ENCODE measurements at regions of chr10 and their contacts with region 1.

Region 1: DNA sequence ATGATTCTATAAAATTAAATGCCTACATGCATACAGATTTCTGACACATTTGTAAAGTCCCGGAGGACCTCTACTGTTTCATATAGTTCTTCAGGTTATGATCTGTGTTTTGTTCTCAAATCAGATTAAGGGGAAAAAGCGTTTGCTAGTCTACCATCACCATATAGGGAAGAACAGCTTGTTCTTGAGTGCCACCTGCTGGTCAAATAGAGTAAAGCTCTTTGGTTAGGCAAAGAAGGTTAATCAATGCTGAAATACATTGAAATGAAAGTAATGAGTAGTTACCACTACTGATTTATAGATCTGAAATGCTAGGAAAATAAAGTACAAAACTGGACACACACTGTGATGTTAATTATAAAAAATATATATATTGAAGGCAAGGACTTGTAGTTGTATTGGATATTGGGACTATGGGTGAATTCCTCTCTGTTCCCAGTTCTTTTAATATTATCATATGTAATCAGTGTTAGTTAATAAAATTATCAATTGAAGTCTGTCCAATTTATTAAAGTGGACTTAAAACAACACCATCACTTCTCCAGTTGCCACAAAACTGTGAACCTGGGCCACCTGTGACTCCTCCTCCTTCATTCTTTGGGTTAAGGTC is 72.6 kb upstream of the PDLIM1 start:
- DNase-seq: peak; percentile 50
- ATAC-seq: peak; percentile 90
- H3K4me3 ChIP-seq: no peak overlapping the region
- H3K27ac ChIP-seq: no peak overlapping the region
- H3K4me1 ChIP-seq: peaks cover 10% of the 10 kb centered on the region; the same call in 1 of the 2 replicates
- H3K27me3 ChIP-seq: no peaks in the 10 kb centered on the region
- CTCF ChIP-seq: peak; percentile 75 to 87 (median 83)
- EP300 ChIP-seq: no peak
- POLR2A ChIP-seq: no peak
- RAD21 ChIP-seq: peak; percentile 100

Region 2: GRCh38 chr10:95183271-95184230 is 179.9 kb before region 1 on chr10:
- CTCF ChIA-PET with region 1: interaction called, 76 read pairs
- POLR2A ChIA-PET with region 1: interaction called, 3 read pairs
- RAD21 ChIA-PET with region 1: interaction called, 12 read pairs
- SMC1A ChIA-PET with region 1: interaction called, 4 read pairs
- in situ Hi-C with region 1: loop called (anchors 5 kb)
- intact Hi-C with region 1: loop called (anchors 1 kb)
- DNase-seq: peak; percentile 27
- ATAC-seq: peak; percentile 99
- H3K4me3 ChIP-seq: peak overlapping the region; percentile 69
- H3K27ac ChIP-seq: no peak overlapping the region
- H3K4me1 ChIP-seq: no peaks in the 10 kb centered on the region
- H3K27me3 ChIP-seq: no peaks in the 10 kb centered on the region
- CTCF ChIP-seq: peak; percentile 84 to 98 (median 92)
- EP300 ChIP-seq: 0 out of 4 replicates have a peak, but pooled peaks of 1 of the 2 experiments have one; percentile 17
- POLR2A ChIP-seq: peak; percentile 69
- RAD21 ChIP-seq: peak; percentile 67

Region 3: GRCh38 chr10:95236068-95236903 is 127.1 kb before region 1 on chr10:
- CTCF ChIA-PET with region 1: interaction called, 31 read pairs
- POLR2A ChIA-PET with region 1: no interaction called
- RAD21 ChIA-PET with region 1: interaction called, 10 read pairs
- SMC1A ChIA-PET with region 1: interaction called, 57 read pairs
- in situ Hi-C with region 1: no loop called
- intact Hi-C with region 1: no loop called
- DNase-seq: peak; percentile 90
- ATAC-seq: peak; percentile 96
- H3K4me3 ChIP-seq: no peak overlapping the region; the same call in 1 of the 2 replicates
- H3K27ac ChIP-seq: peak overlapping the region; percentile 78
- H3K4me1 ChIP-seq: peaks cover 21% of the 10 kb centered on the region
- H3K27me3 ChIP-seq: no peaks in the 10 kb centered on the region
- CTCF ChIP-seq: no peak
- EP300 ChIP-seq: peak; percentile 93
- POLR2A ChIP-seq: peak; percentile 39; the same call in 1 of the 2 replicates
- RAD21 ChIP-seq: no peak

Region 4: DNA sequence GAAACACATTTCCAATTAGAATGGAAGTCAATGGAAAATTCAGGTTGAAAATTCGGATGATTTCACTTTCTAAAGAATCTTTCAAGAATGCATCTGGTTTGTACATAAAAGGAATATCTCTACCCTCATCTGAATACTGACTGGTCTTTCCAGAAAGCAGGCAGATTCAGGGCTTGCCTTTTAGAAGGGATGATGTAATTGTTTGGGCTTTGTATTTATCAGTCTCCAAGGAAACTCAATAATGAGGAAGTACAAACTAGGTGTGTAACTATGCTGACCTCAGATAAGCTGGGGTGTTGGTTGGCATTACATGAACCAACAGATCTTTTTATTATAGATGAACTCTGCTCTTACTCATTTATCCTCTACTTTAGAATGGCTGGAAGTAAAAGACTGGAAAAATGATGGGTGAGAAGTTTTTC is 96.7 kb before region 1 on chr10:
- CTCF ChIA-PET with region 1: interaction called, 18 read pairs
- POLR2A ChIA-PET with region 1: no interaction called
- RAD21 ChIA-PET with region 1: interaction called, 4 read pairs
- SMC1A ChIA-PET with region 1: interaction called, 12 read pairs
- in situ Hi-C with region 1: no loop called
- intact Hi-C with region 1: no loop called
- DNase-seq: no peak
- ATAC-seq: peak; percentile 93
- H3K4me3 ChIP-seq: no peak overlapping the region
- H3K27ac ChIP-seq: no peak overlapping the region
- H3K4me1 ChIP-seq: peaks cover 4% of the 10 kb centered on the region; the same call in 1 of the 2 replicates
- H3K27me3 ChIP-seq: no peaks in the 10 kb centered on the region
- CTCF ChIP-seq: no peak
- EP300 ChIP-seq: peak in 1 of 2 experiments; percentile 45; a peak in 1 of 4 replicates
- POLR2A ChIP-seq: no peak
- RAD21 ChIP-seq: no peak

Region 5: GRCh38 chr10:95290461-95291364 is 72.7 kb before region 1 on chr10 and contains the start of gene PDLIM1:
- CTCF ChIA-PET with region 1: interaction called, 348 read pairs
- POLR2A ChIA-PET with region 1: interaction called, 5 read pairs
- RAD21 ChIA-PET with region 1: interaction called, 139 read pairs
- SMC1A ChIA-PET with region 1: interaction called, 313 read pairs
- in situ Hi-C with region 1: no loop called
- intact Hi-C with region 1: loop called (anchors 1 kb)
- DNase-seq: no peak
- ATAC-seq: peak; percentile 55
- H3K4me3 ChIP-seq: peak within 1 kb of the TSS; percentile 97
- H3K27ac ChIP-seq: peak within 1 kb of the TSS; percentile 98
- H3K4me1 ChIP-seq: peaks cover 47% of the 10 kb centered on the region
- H3K27me3 ChIP-seq: no peaks in the 10 kb centered on the region
- CTCF ChIP-seq: peak; percentile 21 to 30 (median 27); a peak in 5 of 6 replicates
- EP300 ChIP-seq: no peak
- POLR2A ChIP-seq: peak; percentile 96
- RAD21 ChIP-seq: no peak
- polyA plus RNA-seq, gene PDLIM1: 133 to 338 TPM

Region 6: DNA sequence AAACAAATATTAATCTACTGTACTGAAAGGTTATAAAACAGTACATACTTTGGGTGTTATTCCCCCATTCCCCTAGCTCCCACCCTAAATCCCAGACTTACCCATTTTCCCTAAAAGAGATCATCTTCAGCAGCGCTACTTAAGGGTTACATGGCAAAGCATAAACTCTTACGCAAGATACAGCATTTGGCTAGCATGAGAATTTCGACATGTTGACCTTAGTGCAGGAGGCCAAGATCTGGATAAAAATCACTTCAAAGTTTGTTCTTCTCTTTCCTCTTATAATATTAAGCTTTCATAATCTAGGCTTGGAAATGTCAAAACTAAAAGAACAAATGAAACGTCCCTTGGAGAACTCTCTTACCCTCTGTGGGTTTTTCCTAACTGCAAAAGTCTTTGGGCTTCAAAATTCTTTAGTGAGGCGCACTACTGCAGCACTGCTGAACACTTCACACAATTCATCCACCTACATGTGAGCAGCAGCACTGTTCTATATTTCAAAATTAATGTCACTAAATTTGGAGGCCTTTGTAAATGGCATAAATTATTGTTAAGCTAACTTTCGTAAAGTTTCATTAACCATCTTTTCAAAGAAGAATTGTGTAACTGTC is 13.1 kb before region 1 on chr10:
- CTCF ChIA-PET with region 1: interaction called, 21 read pairs
- POLR2A ChIA-PET with region 1: no interaction called
- RAD21 ChIA-PET with region 1: interaction called, 8 read pairs
- SMC1A ChIA-PET with region 1: interaction called, 22 read pairs
- in situ Hi-C with region 1: no loop called
- intact Hi-C with region 1: no loop called
- DNase-seq: no peak
- ATAC-seq: no peak
- H3K4me3 ChIP-seq: no peak overlapping the region
- H3K27ac ChIP-seq: no peak overlapping the region
- H3K4me1 ChIP-seq: peaks cover 8% of the 10 kb centered on the region; the same call in 1 of the 2 replicates
- H3K27me3 ChIP-seq: no peaks in the 10 kb centered on the region
- CTCF ChIP-seq: no peak
- EP300 ChIP-seq: no peak
- POLR2A ChIP-seq: no peak
- RAD21 ChIP-seq: no peak

Region 7: DNA sequence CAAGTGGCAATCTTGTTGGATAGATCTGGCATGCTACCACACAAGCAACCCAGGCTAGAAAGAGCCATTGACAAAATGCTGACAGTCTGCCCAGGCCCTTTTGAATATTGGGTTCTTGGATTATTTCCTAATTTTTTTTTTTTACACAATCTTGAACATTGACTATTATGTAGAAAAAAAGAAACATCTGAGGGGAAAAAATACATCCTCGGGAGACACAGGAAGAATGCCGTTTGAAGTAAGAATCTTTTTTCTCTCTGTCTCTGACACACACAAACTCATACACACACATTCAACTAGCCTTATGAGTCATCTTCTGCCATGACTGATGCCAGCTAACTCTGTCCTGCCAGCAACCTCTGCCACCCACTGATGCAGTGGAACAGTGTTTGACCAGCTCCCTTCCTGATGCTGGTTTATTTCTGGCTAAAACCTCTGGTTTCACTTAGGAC is 150.6 kb after region 1 on chr10:
- CTCF ChIA-PET with region 1: no interaction called
- POLR2A ChIA-PET with region 1: no interaction called
- RAD21 ChIA-PET with region 1: no interaction called
- SMC1A ChIA-PET with region 1: no interaction called
- in situ Hi-C with region 1: no loop called
- intact Hi-C with region 1: no loop called
- DNase-seq: no peak
- ATAC-seq: no peak
- H3K4me3 ChIP-seq: no peak overlapping the region
- H3K27ac ChIP-seq: no peak overlapping the region
- H3K4me1 ChIP-seq: no peaks in the 10 kb centered on the region
- H3K27me3 ChIP-seq: peaks cover 0 to 3% of the 10 kb centered on the region in 2 experiments; a peak in 2 of 4 replicates
- CTCF ChIP-seq: no peak
- EP300 ChIP-seq: no peak
- POLR2A ChIP-seq: no peak
- RAD21 ChIP-seq: no peak

Measured in GM12878 (cell line).